GM12878 (cell line): ENCODE measurements at regions of chr1 and their contacts with region 1.

Region 1: DNA sequence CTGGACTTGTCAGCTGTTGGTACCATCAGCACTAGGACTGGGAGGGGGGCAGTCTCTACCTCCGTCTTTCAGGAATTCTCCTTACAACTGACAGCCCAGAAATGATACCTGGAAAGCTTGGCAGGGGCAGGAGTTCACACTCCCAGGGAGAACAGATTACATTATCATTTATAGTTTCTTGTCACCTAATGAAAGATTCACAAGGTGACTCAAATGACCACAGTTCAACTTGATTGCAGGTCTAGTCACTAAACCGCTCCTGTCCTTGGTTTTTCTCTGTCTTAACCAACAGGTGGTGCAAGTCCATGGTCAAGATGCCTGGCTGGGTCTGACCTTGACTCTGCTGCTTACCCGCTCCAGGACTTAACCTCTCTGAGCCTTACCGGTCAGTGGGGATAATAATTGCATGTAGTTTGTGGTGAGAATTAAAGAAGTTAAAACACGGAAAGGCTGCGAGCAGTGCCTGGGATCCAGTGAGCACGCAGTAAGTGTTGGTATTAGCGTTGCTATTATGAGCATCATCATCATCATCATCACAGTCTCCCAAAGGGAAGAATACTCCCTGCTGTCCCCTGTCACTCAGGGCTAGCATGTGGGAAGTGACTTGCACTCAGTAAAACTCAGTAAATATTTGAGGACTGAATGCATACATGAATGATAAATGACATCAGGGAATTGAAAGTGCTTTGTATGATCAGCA is 125.3 kb upstream of the CD34 start:
- DNase-seq: no peak
- ATAC-seq: peak; percentile 73
- H3K4me3 ChIP-seq: no peak overlapping the region
- H3K27ac ChIP-seq: no peak overlapping the region
- H3K4me1 ChIP-seq: no peaks in the 10 kb centered on the region
- H3K27me3 ChIP-seq: peaks cover 0 to 2% of the 10 kb centered on the region in 2 experiments; a peak in 3 of 4 replicates
- CTCF ChIP-seq: peak; percentile 31 to 36 (median 33); a peak in 4 of 6 replicates
- EP300 ChIP-seq: no peak
- POLR2A ChIP-seq: no peak
- RAD21 ChIP-seq: no peak

Region 2: DNA sequence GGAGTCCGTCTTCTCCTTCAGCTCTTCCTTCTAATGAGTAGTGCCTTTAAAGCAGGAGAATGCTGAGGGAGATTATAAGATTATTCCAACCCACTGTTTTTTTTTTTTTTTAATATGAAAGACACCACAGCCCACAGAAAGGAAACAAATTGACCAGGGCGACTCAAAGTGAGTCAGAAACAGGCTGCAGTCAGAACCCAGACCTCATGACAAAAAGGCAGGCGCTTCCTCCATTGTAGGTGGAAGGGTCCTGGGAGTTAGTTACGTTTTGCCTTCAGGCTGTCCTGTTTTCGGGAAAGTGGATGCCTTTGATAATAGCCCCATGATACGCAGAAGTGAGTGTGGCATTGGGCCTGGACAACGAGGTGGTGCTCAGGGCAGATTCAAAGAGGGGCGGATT is 186.9 kb after region 1 on chr1:
- CTCF ChIA-PET with region 1: no interaction called
- POLR2A ChIA-PET with region 1: no interaction called
- RAD21 ChIA-PET with region 1: no interaction called
- SMC1A ChIA-PET with region 1: no interaction called
- in situ Hi-C with region 1: no loop called
- intact Hi-C with region 1: no loop called
- DNase-seq: no peak
- ATAC-seq: no peak
- H3K4me3 ChIP-seq: no peak overlapping the region
- H3K27ac ChIP-seq: no peak overlapping the region
- H3K4me1 ChIP-seq: no peaks in the 10 kb centered on the region
- H3K27me3 ChIP-seq: peaks cover 2 to 20% of the 10 kb centered on the region in 2 experiments; a peak in 3 of 4 replicates
- CTCF ChIP-seq: no peak
- EP300 ChIP-seq: no peak
- POLR2A ChIP-seq: no peak
- RAD21 ChIP-seq: no peak

Region 3: GRCh38 chr1:208245185-208245705 is 209.0 kb after region 1 on chr1:
- CTCF ChIA-PET with region 1: interaction called, 19 read pairs
- POLR2A ChIA-PET with region 1: no interaction called
- RAD21 ChIA-PET with region 1: no interaction called
- SMC1A ChIA-PET with region 1: interaction called, 5 read pairs
- in situ Hi-C with region 1: no loop called
- intact Hi-C with region 1: no loop called
- DNase-seq: peak; percentile 26
- ATAC-seq: peak; percentile 92
- H3K4me3 ChIP-seq: no peak overlapping the region
- H3K27ac ChIP-seq: no peak overlapping the region
- H3K4me1 ChIP-seq: peaks cover 8% of the 10 kb centered on the region
- H3K27me3 ChIP-seq: peaks cover 10 to 15% of the 10 kb centered on the region in 2 experiments
- CTCF ChIP-seq: peak; percentile 74 to 79 (median 74)
- EP300 ChIP-seq: no peak
- POLR2A ChIP-seq: no peak
- RAD21 ChIP-seq: peak; percentile 75